ENCODE measurements at regions of chr1 and their contacts with region 1.

Region 1: GRCh38 chr1:193479187-193479586 is 292.8 kb upstream of the B3GALT2 start:
- DNase-seq: peak; percentile 93
- H3K4me3 Mint-ChIP-seq: peak overlapping the region; percentile 2
- H3K27ac Mint-ChIP-seq: peak overlapping the region; percentile 93
- H3K4me1 Mint-ChIP-seq: peaks cover 67% of the 10 kb centered on the region
- H3K27me3 Mint-ChIP-seq: no peaks in the 10 kb centered on the region

Region 2: GRCh38 chr1:193183019-193183627 is 296.1 kb before region 1 on chr1:
- CTCF ChIA-PET with region 1: interaction called, 3 read pairs
- POLR2A ChIA-PET with region 1: interaction called, 12 read pairs
- DNase-seq: no peak
- H3K4me3 Mint-ChIP-seq: peak overlapping the region; percentile 59
- H3K27ac Mint-ChIP-seq: no peak overlapping the region
- H3K4me1 Mint-ChIP-seq: peaks cover 21% of the 10 kb centered on the region
- H3K27me3 Mint-ChIP-seq: no peaks in the 10 kb centered on the region

Region 3: GRCh38 chr1:193456811-193457280 is 22.3 kb before region 1 on chr1:
- CTCF ChIA-PET with region 1: interaction called, 9 read pairs
- POLR2A ChIA-PET with region 1: interaction called, 144 read pairs
- DNase-seq: no peak
- H3K4me3 Mint-ChIP-seq: no peak overlapping the region
- H3K27ac Mint-ChIP-seq: no peak overlapping the region
- H3K4me1 Mint-ChIP-seq: peaks cover 28% of the 10 kb centered on the region
- H3K27me3 Mint-ChIP-seq: no peaks in the 10 kb centered on the region

Region 4: DNA sequence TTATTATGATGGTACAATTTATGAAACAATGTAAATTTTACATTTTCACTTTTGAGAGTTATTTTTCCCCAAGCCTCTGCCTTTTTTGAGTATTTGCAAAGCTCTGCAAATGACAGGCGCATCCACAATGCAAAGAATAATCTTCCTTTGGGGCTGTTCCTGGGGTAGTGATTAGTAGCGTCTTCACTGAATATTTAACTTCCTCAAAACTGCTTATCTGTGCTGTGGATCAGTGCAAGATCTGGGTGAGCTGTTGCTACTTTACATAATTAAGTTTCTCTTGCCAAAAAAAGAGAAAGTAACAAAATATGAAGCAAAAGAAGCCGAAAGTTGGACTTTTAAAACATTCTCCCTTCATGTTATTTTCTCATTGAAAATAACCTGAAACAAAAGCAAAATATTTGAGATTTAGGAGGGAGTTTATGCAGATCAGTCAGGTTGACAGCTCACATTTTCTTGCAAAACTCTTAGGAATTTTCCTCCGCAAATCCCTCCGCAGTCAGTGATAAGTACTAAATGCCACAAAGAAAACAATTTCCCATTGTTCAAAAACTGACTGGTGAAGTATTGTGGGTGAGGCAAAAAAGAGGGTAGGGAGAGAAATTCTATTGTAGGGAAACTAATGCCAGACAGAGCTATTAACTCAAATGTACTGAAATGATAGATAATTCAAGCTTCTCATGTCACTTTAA is 16.4 kb before region 1 on chr1:
- CTCF ChIA-PET with region 1: interaction called, 9 read pairs
- POLR2A ChIA-PET with region 1: interaction called, 144 read pairs
- DNase-seq: no peak
- H3K4me3 Mint-ChIP-seq: peak overlapping the region; percentile 49
- H3K27ac Mint-ChIP-seq: peak overlapping the region; percentile 78
- H3K4me1 Mint-ChIP-seq: peaks cover 50% of the 10 kb centered on the region
- H3K27me3 Mint-ChIP-seq: no peaks in the 10 kb centered on the region

Region 5: GRCh38 chr1:193553556-193553955 is 74.4 kb after region 1 on chr1:
- CTCF ChIA-PET with region 1: no interaction called
- POLR2A ChIA-PET with region 1: no interaction called
- DNase-seq: no peak
- H3K4me3 Mint-ChIP-seq: no peak overlapping the region
- H3K27ac Mint-ChIP-seq: no peak overlapping the region
- H3K4me1 Mint-ChIP-seq: peaks cover 4% of the 10 kb centered on the region
- H3K27me3 Mint-ChIP-seq: no peaks in the 10 kb centered on the region

Measured in activated CD4-positive, alpha-beta memory T cell treated with anti-CD3 and anti-CD28 coated beads, Interleukin-2, amount 10 ng/mL, durations not matched to agents 7 days and 5 days (primary cell).